CD8-positive, alpha-beta memory T cell (primary cell): ENCODE measurements at regions of chr3 and their contacts with region 1.

Region 1: DNA sequence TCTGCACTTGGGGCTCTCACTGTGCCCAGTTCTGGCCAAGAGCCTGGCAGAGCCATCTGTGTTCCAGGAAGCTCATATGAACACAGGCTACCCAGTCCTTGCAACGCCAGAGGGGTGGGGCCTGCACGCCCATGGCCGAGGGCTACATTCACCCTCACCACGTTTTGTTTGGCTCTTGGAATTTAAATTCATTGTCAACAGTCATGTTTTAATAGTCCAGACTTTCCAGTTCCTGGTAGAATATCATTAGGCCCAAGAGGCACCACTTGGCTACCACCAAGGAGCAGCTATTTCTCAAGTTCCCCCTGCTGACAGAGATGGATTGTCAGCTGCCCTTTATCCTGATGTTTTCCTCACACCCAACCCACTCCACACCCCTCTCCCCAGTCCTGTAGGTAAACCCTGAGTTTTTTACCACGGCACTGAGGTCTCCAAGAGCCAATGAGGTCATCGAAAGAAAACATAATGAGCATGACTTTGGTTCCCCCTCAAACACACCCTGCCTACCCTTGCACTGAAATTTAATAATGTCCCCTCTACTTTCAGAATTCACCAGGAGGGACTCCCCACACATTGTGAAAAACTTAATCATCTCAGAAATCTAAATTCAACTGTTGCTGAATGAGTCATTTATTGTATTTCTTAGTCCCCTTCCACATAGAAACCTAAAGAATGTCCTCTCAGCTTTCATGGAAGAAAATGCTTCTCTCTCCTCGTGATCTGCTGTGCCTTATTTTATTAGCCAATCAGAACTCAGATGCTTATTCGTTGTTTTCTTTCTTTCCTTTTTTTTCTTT is 125.1 kb downstream of the SHQ1 start:
- DNase-seq: no peak
- H3K4me3 ChIP-seq: no peak overlapping the region
- H3K4me3 Mint-ChIP-seq: no peak overlapping the region
- H3K27ac ChIP-seq: no peak overlapping the region
- H3K27ac Mint-ChIP-seq: no peak overlapping the region
- H3K4me1 ChIP-seq: no peaks in the 10 kb centered on the region
- H3K4me1 Mint-ChIP-seq: no peaks in the 10 kb centered on the region
- H3K27me3 ChIP-seq: no peaks in the 10 kb centered on the region
- H3K27me3 Mint-ChIP-seq: peaks cover 0 to 2% of the 10 kb centered on the region in 2 donors

Region 2: GRCh38 chr3:72665701-72666443 is 57.3 kb before region 1 on chr3:
- CTCF ChIA-PET with region 1: no interaction called
- POLR2A ChIA-PET with region 1: interaction called, 10 read pairs
- DNase-seq: peak; percentile 21 to 55 (median 24)
- H3K4me3 ChIP-seq: no peak overlapping the region
- H3K4me3 Mint-ChIP-seq: no peak overlapping the region
- H3K27ac ChIP-seq: no peak overlapping the region
- H3K27ac Mint-ChIP-seq: no peak overlapping the region
- H3K4me1 ChIP-seq: no peaks in the 10 kb centered on the region
- H3K4me1 Mint-ChIP-seq: no peaks in the 10 kb centered on the region
- H3K27me3 ChIP-seq: no peaks in the 10 kb centered on the region
- H3K27me3 Mint-ChIP-seq: peaks cover 3 to 4% of the 10 kb centered on the region in 2 donors

Region 3: DNA sequence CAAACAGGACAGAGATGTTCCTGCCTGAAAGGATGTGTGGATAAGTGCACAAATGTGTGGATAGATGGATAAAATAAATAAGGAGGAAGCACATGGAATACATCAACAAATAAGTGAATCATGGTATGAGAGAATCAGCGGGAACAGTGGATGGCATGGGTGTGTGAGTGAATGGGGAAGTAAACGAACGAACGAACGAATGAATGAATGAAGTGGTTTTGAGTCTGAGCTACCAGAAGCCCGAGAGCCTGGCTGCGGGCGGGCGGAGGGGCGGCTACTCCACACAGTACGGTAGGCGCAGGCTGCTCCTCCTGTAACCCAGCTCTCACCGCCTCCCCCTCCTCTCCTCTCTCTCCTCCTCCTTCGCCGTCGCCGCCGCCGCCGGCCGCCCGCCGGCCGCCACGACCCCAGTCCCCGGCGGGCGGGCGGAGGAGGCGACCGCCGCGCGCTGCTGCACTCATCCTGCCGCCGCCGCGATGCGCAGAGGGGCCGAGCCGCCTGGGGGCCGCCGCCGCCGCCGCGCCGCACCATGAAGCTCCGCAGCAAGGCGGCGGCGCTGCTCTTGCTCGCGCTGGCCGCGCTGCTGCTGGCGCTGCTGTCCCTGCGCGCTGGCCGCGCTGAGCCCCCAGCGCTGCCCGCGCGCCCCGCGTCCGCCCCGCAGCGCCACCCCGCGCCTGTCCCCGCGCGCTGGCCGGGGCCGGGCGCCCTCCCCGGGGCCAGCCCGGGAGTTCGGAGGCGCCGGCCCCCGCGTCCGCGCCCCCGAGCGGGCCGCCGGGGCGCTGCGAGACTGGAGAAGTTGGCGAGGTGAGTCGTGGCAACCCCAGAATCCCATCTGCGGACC is 164.8 kb after region 1 on chr3 and contains the start of gene GXYLT2:
- CTCF ChIA-PET with region 1: no interaction called
- POLR2A ChIA-PET with region 1: no interaction called
- DNase-seq: peak in 1 of 5 donors; percentile 9
- H3K4me3 ChIP-seq: peak within 1 kb of the TSS; percentile 47
- H3K4me3 Mint-ChIP-seq: peak within 1 kb of the TSS; percentile 53 to 79 (median 73)
- H3K27ac ChIP-seq: no peak within 1 kb of the TSS
- H3K27ac Mint-ChIP-seq: no peak within 1 kb of the TSS
- H3K4me1 ChIP-seq: peaks cover 7% of the 10 kb centered on the region
- H3K4me1 Mint-ChIP-seq: peaks cover 11 to 18% (median 15%) of the 10 kb centered on the region in 3 donors
- H3K27me3 ChIP-seq: peaks cover 26% of the 10 kb centered on the region
- H3K27me3 Mint-ChIP-seq: peaks cover 39 to 82% of the 10 kb centered on the region in 2 donors
- total RNA-seq, gene GXYLT2: not detected

Region 4: GRCh38 chr3:72924055-72924454 is 200.9 kb after region 1 on chr3:
- CTCF ChIA-PET with region 1: no interaction called
- POLR2A ChIA-PET with region 1: no interaction called
- DNase-seq: no peak
- H3K4me3 ChIP-seq: no peak overlapping the region
- H3K4me3 Mint-ChIP-seq: no peak overlapping the region
- H3K27ac ChIP-seq: no peak overlapping the region
- H3K27ac Mint-ChIP-seq: no peak overlapping the region
- H3K4me1 ChIP-seq: no peaks in the 10 kb centered on the region
- H3K4me1 Mint-ChIP-seq: no peaks in the 10 kb centered on the region
- H3K27me3 ChIP-seq: no peaks in the 10 kb centered on the region
- H3K27me3 Mint-ChIP-seq: peaks cover 2 to 16% of the 10 kb centered on the region in 2 donors